ENCODE measurements at regions of chr11 and their contacts with region 1.

Region 1: GRCh38 chr11:103108933-103109817 is at the start of gene DYNC2H1:
- DNase-seq: peak; percentile 91 to 95 (median 94)
- H3K4me3 ChIP-seq: peak within 1 kb of the TSS; percentile 38 to 94 (median 81)
- H3K27ac ChIP-seq: peak within 1 kb of the TSS in 1 of 2 experiments; percentile 64
- H3K4me1 ChIP-seq: peaks cover 6 to 16% (median 10%) of the 10 kb centered on the region in 4 experiments
- H3K27me3 ChIP-seq: peaks cover 0 to 5% (median 2%) of the 10 kb centered on the region in 5 experiments

Region 2: GRCh38 chr11:102680945-102681344 is 428.2 kb before region 1 on chr11:
- CTCF ChIA-PET with region 1: no interaction called
- POLR2A ChIA-PET with region 1: no interaction called
- DNase-seq: peak in 2 of 3 donors; percentile 47 to 49
- H3K4me3 ChIP-seq: no peak overlapping the region
- H3K27ac ChIP-seq: no peak overlapping the region
- H3K4me1 ChIP-seq: no peaks in the 10 kb centered on the region
- H3K27me3 ChIP-seq: no peaks in the 10 kb centered on the region

Region 3: DNA sequence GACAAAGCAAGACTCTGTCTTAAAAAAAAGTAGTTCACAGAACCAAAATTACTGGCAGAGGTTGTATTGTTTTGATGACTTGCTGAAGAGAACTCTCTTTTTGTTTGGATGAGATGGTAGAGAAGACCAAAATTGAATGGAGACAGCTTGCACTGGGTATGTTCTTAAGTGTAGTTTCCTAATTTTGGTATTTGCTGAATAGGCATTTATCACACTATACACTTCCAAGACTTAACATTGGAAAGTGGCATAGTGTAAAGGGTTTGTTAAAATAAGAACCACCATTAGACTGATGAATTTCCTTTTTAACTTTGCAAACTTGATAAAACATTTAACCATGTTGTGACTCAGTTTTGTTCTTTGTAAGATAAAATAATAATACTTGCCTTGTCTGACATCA is 11.9 kb before region 1 on chr11:
- CTCF ChIA-PET with region 1: interaction called, 15 read pairs
- POLR2A ChIA-PET with region 1: no interaction called
- DNase-seq: no peak
- H3K4me3 ChIP-seq: no peak overlapping the region
- H3K27ac ChIP-seq: no peak overlapping the region
- H3K4me1 ChIP-seq: peaks cover 0 to 5% (median 2%) of the 10 kb centered on the region in 4 experiments
- H3K27me3 ChIP-seq: peaks cover 3 to 28% (median 14%) of the 10 kb centered on the region in 5 experiments

Measured in common myeloid progenitor, CD34-positive (primary cell).